ENCODE measurements at regions of chr2 and their contacts with region 1.

Region 1: GRCh38 chr2:38377050-38377828 is at the start of gene ATL2:
- DNase-seq: peak; percentile 95 to 98 (median 97)
- H3K4me3 ChIP-seq: peak within 1 kb of the TSS; percentile 79 to 96 (median 89)
- H3K27ac ChIP-seq: peak within 1 kb of the TSS; percentile 80 to 93
- H3K4me1 ChIP-seq: peaks cover 7 to 40% (median 27%) of the 10 kb centered on the region in 4 experiments
- H3K27me3 ChIP-seq: no peaks in the 10 kb centered on the region

Region 2: GRCh38 chr2:38465789-38466127 is 88.5 kb after region 1 on chr2:
- CTCF ChIA-PET with region 1: interaction called, 12 read pairs
- POLR2A ChIA-PET with region 1: no interaction called
- DNase-seq: peak; percentile 58 to 69 (median 64)
- H3K4me3 ChIP-seq: no peak overlapping the region
- H3K27ac ChIP-seq: no peak overlapping the region
- H3K4me1 ChIP-seq: peaks cover 0 to 2% (median 0%) of the 10 kb centered on the region in 4 experiments
- H3K27me3 ChIP-seq: peaks cover 0 to 3% (median 0%) of the 10 kb centered on the region in 5 experiments

Region 3: GRCh38 chr2:38978296-38978903 is 601.2 kb after region 1 on chr2:
- CTCF ChIA-PET with region 1: no interaction called
- POLR2A ChIA-PET with region 1: no interaction called
- DNase-seq: peak in 2 of 3 donors; percentile 46 to 82
- H3K4me3 ChIP-seq: no peak overlapping the region
- H3K27ac ChIP-seq: no peak overlapping the region
- H3K4me1 ChIP-seq: peaks cover 0 to 11% (median 6%) of the 10 kb centered on the region in 4 experiments
- H3K27me3 ChIP-seq: no peaks in the 10 kb centered on the region

Measured in common myeloid progenitor, CD34-positive (primary cell).